ENCODE measurements at regions of chr3 and their contacts with region 1.

Region 1: GRCh38 chr3:50350527-50351322 is at the starts of genes CYB561D2 and NPRL2:
- DNase-seq: peak; percentile 96
- H3K4me3 ChIP-seq: peak within 1 kb of the TSS; percentile 91
- H3K4me3 Mint-ChIP-seq: peak within 1 kb of the TSS; percentile 76
- H3K27ac Mint-ChIP-seq: peak within 1 kb of the TSS; percentile 81
- H3K4me1 ChIP-seq: peaks cover 3% of the 10 kb centered on the region; the same call in 1 of the 2 replicates
- H3K4me1 Mint-ChIP-seq: peaks cover 12% of the 10 kb centered on the region
- H3K27me3 ChIP-seq: no peaks in the 10 kb centered on the region
- H3K27me3 Mint-ChIP-seq: no peaks in the 10 kb centered on the region
- CTCF ChIP-seq: no peak
- total RNA-seq, gene CYB561D2: 21.2 and 21.4 TPM in 2 replicates
- total RNA-seq, gene NPRL2: 23.7 and 29.8 TPM in 2 replicates

Region 2: GRCh38 chr3:50292159-50293078 is 58.3 kb before region 1 on chr3 and contains the start of gene IFRD2:
- CTCF ChIA-PET with region 1: no interaction called
- POLR2A ChIA-PET with region 1: interaction called, 11 read pairs
- intact Hi-C with region 1: no loop called
- DNase-seq: peak; percentile 96 to 98
- H3K4me3 ChIP-seq: peak within 1 kb of the TSS; percentile 78
- H3K4me3 Mint-ChIP-seq: peak within 1 kb of the TSS; percentile 85
- H3K27ac Mint-ChIP-seq: peak within 1 kb of the TSS; percentile 98
- H3K4me1 ChIP-seq: peaks cover 7% of the 10 kb centered on the region
- H3K4me1 Mint-ChIP-seq: peaks cover 16% of the 10 kb centered on the region
- H3K27me3 ChIP-seq: no peaks in the 10 kb centered on the region
- H3K27me3 Mint-ChIP-seq: no peaks in the 10 kb centered on the region
- CTCF ChIP-seq: no peak
- total RNA-seq, gene IFRD2: 88.0 and 89.5 TPM in 2 replicates

Region 3: DNA sequence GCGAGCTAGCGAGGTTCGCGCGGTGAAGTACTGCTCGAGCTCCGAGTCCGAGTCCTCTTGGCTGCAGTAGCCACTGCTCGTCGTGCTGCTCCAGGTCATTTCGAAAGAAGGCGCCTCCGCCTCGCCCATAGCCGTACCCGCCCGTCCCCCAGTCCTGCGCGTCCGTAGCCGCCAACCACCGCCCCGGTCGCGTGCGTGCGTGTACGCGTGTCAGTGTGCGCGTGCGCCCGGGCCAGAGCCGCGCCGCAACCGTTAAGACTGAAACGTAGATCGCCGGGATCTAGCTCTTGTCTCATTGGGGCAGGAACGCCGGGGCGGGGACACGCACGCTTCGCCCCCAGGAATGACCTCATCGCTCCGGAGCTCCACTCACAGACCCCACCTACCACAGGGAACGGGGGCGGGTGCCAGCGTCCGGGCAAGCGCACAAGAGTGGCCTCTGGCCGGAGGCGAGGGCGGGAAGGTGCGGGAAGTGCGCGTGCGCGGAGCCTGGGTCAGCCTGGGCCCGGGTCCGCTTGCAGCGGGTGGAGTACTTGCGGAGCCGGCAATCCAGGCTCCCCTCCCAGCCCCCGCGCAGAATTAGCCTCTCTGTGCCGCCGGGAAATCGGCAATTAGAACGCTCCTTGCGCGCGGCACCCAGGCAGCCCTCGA is 13.4 kb before region 1 on chr3:
- CTCF ChIA-PET with region 1: interaction called, 15 read pairs
- POLR2A ChIA-PET with region 1: interaction called, 42 read pairs
- intact Hi-C with region 1: no loop called
- DNase-seq: peak; percentile 99
- H3K4me3 ChIP-seq: peak overlapping the region; percentile 63
- H3K4me3 Mint-ChIP-seq: peak overlapping the region; percentile 94
- H3K27ac Mint-ChIP-seq: peak overlapping the region; percentile 95
- H3K4me1 ChIP-seq: peaks cover 16% of the 10 kb centered on the region
- H3K4me1 Mint-ChIP-seq: peaks cover 11% of the 10 kb centered on the region
- H3K27me3 ChIP-seq: no peaks in the 10 kb centered on the region
- H3K27me3 Mint-ChIP-seq: no peaks in the 10 kb centered on the region
- CTCF ChIP-seq: no peak

Region 4: GRCh38 chr3:50365080-50365841 is 14.5 kb after region 1 on chr3:
- CTCF ChIA-PET with region 1: interaction called, 4 read pairs
- POLR2A ChIA-PET with region 1: interaction called, 9 read pairs
- intact Hi-C with region 1: loop called (anchors 2 kb)
- DNase-seq: peak; percentile 89 to 93
- H3K4me3 ChIP-seq: peak overlapping the region; percentile 66
- H3K4me3 Mint-ChIP-seq: peak overlapping the region; percentile 72
- H3K27ac Mint-ChIP-seq: no peak overlapping the region
- H3K4me1 ChIP-seq: 0 out of 2 replicates have a peak, but pooled peaks cover 5% of the 10 kb centered on the region
- H3K4me1 Mint-ChIP-seq: no peaks in the 10 kb centered on the region
- H3K27me3 ChIP-seq: no peaks in the 10 kb centered on the region
- H3K27me3 Mint-ChIP-seq: peaks cover 6% of the 10 kb centered on the region
- CTCF ChIP-seq: peak in 1 of 2 experiments; percentile 17

Region 5: DNA sequence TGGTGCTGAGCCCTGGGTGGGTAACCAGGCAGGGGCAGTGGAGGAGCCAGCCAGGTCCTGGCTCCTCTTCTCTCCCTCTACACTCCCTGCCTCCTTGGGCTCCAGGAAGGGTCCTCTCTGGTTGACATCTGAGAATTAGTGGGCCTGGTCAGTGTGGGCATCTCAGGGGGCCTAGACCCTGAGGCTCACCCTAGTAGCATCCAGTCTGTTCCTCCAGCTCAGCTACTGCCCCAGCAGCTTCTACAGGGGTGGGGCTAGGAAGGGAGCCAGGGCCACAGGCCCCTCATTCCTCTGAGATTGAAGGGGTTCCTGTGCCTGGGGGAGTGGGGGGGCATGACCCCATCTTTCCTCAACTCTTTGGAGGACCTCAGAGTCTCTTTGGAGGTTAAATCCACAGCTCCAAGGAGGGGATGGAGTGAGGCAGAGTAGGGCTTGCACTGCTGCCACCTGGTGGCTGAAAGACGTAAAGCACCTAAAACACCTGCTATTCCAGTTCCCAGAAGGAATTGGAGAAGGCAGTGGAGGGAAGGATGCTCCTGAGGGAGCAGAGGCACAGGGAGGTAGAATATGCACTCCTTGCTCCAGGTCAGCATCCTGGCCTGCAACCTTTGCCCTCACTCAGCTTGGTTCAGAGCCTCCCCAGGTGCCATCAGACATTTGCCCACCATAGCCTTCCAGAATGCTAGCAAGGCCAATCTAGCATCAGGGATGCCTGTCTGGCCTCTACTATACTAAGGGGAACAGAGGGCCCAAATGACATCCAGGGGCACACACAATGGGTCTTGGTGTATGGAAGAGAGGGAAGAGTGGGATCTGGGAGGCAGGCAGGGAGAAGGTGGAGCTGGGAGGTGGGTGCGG is 191.7 kb after region 1 on chr3:
- CTCF ChIA-PET with region 1: interaction called, 4 read pairs
- POLR2A ChIA-PET with region 1: interaction called, 4 read pairs
- intact Hi-C with region 1: loop called (anchors 2 kb)
- DNase-seq: peak; percentile 57 to 77
- H3K4me3 ChIP-seq: no peak overlapping the region
- H3K4me3 Mint-ChIP-seq: no peak overlapping the region
- H3K27ac Mint-ChIP-seq: no peak overlapping the region
- H3K4me1 ChIP-seq: no peaks in the 10 kb centered on the region
- H3K4me1 Mint-ChIP-seq: no peaks in the 10 kb centered on the region
- H3K27me3 ChIP-seq: no peaks in the 10 kb centered on the region
- H3K27me3 Mint-ChIP-seq: peaks cover 5% of the 10 kb centered on the region
- CTCF ChIP-seq: peak; percentile 82 to 87

Region 6: GRCh38 chr3:50550079-50550741 is 199.5 kb after region 1 on chr3:
- CTCF ChIA-PET with region 1: no interaction called
- POLR2A ChIA-PET with region 1: no interaction called
- intact Hi-C with region 1: loop called (anchors 1 kb)
- DNase-seq: peak; percentile 52 to 68
- H3K4me3 ChIP-seq: no peak overlapping the region
- H3K4me3 Mint-ChIP-seq: no peak overlapping the region
- H3K27ac Mint-ChIP-seq: no peak overlapping the region
- H3K4me1 ChIP-seq: no peaks in the 10 kb centered on the region
- H3K4me1 Mint-ChIP-seq: no peaks in the 10 kb centered on the region
- H3K27me3 ChIP-seq: no peaks in the 10 kb centered on the region
- H3K27me3 Mint-ChIP-seq: no peaks in the 10 kb centered on the region
- CTCF ChIP-seq: peak; percentile 72 to 74

Measured in Caco-2 (cell line).